Astrocyte of the cerebellum (primary cell): ENCODE measurements at regions of chr5 and their contacts with region 1.

Region 1: GRCh38 chr5:69293895-69294294 is 38.7 kb downstream of the CCDC125 start:
- DNase-seq: no peak
- H3K4me3 ChIP-seq: no peak overlapping the region
- CTCF ChIP-seq: no peak

Region 2: DNA sequence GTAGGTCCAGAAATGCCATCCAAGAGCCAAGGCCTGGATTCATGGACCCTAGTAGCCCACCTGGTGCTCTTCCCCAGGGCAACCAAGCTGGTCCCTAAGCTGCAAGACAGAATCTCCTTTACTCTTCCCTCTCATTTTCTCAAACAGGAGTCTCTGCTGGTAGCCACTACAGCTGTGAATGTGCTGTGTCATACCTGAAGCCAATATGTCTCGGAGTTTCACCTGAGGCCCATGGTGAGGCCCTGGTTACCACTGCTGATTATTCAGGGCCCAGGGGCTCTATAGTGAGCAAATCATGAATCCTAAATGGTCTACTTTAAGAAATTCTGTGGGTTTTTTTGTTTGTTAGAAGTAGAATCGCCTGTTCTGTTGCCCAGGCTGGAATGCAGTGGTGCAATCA is 43.3 kb before region 1 on chr5:
- in situ Hi-C with region 1: loop called (anchors 5 kb)
- DNase-seq: no peak
- H3K4me3 ChIP-seq: no peak overlapping the region
- CTCF ChIP-seq: no peak

Region 3: DNA sequence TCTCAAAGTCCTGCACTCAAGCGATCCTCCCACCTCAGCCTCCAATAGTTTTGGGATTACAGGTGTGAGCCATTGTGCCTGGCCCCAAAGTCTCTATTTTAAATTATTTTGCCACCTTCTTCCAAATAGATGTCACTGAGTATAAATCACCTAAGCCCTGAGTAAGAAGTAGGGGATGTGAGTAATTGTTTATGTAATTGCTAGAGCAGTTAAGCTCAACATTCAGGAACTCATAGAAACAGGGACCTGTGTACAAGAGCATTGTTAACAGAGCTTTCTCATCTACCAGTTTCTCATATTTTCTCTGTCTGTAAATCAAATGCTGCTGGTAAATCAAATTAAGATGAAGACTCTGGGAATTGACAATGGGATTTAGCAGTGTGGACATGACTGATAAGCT is 32.9 kb before region 1 on chr5:
- in situ Hi-C with region 1: no loop called
- DNase-seq: no peak
- H3K4me3 ChIP-seq: no peak overlapping the region
- CTCF ChIP-seq: no peak